B cell (primary cell): ENCODE measurements at regions of chr18 and their contacts with region 1.

Region 1: GRCh38 chr18:77054606-77055428 is 77.8 kb downstream of the MBP start:
- DNase-seq: peak; percentile 91
- ATAC-seq: peak; percentile 69
- H3K4me3 ChIP-seq: peak overlapping the region; percentile 32 to 41 (median 38)
- H3K4me3 Mint-ChIP-seq: peak overlapping the region; percentile 89
- H3K27ac ChIP-seq: peak overlapping the region; percentile 92 to 96
- H3K27ac Mint-ChIP-seq: peak overlapping the region; percentile 96
- H3K4me1 ChIP-seq: peaks cover 56 to 61% of the 10 kb centered on the region in 2 donors
- H3K4me1 Mint-ChIP-seq: peaks cover 68% of the 10 kb centered on the region
- H3K27me3 ChIP-seq: no peaks in the 10 kb centered on the region
- H3K27me3 Mint-ChIP-seq: no peaks in the 10 kb centered on the region
- CTCF ChIP-seq: peak; percentile 64

Region 2: GRCh38 chr18:76604935-76605240 is 449.9 kb before region 1 on chr18:
- CTCF ChIA-PET with region 1: no interaction called
- POLR2A ChIA-PET with region 1: no interaction called
- intact Hi-C with region 1: no loop called
- DNase-seq: no peak
- ATAC-seq: no peak
- H3K4me3 ChIP-seq: no peak overlapping the region
- H3K4me3 Mint-ChIP-seq: no peak overlapping the region
- H3K27ac ChIP-seq: no peak overlapping the region
- H3K27ac Mint-ChIP-seq: no peak overlapping the region
- H3K4me1 ChIP-seq: no peaks in the 10 kb centered on the region
- H3K4me1 Mint-ChIP-seq: no peaks in the 10 kb centered on the region
- H3K27me3 ChIP-seq: no peaks in the 10 kb centered on the region
- H3K27me3 Mint-ChIP-seq: no peaks in the 10 kb centered on the region
- CTCF ChIP-seq: no peak

Region 3: GRCh38 chr18:77079954-77080682 is 25.3 kb after region 1 on chr18:
- CTCF ChIA-PET with region 1: interaction called, 4 read pairs
- POLR2A ChIA-PET with region 1: interaction called, 5 read pairs
- intact Hi-C with region 1: loop called (anchors 1 kb)
- DNase-seq: peak; percentile 91
- ATAC-seq: peak; percentile 98
- H3K4me3 ChIP-seq: peak overlapping the region in 1 of 5 experiments; percentile 38
- H3K4me3 Mint-ChIP-seq: peak overlapping the region; percentile 70
- H3K27ac ChIP-seq: peak overlapping the region in 1 of 2 donors; percentile 87
- H3K27ac Mint-ChIP-seq: peak overlapping the region; percentile 94
- H3K4me1 ChIP-seq: peaks cover 18 to 27% of the 10 kb centered on the region in 2 donors
- H3K4me1 Mint-ChIP-seq: peaks cover 66% of the 10 kb centered on the region
- H3K27me3 ChIP-seq: no peaks in the 10 kb centered on the region
- H3K27me3 Mint-ChIP-seq: no peaks in the 10 kb centered on the region
- CTCF ChIP-seq: no peak